Naive thymus-derived CD4-positive, alpha-beta T cell (primary cell): ENCODE measurements at regions of chr7 and their contacts with region 1.

Region 1: DNA sequence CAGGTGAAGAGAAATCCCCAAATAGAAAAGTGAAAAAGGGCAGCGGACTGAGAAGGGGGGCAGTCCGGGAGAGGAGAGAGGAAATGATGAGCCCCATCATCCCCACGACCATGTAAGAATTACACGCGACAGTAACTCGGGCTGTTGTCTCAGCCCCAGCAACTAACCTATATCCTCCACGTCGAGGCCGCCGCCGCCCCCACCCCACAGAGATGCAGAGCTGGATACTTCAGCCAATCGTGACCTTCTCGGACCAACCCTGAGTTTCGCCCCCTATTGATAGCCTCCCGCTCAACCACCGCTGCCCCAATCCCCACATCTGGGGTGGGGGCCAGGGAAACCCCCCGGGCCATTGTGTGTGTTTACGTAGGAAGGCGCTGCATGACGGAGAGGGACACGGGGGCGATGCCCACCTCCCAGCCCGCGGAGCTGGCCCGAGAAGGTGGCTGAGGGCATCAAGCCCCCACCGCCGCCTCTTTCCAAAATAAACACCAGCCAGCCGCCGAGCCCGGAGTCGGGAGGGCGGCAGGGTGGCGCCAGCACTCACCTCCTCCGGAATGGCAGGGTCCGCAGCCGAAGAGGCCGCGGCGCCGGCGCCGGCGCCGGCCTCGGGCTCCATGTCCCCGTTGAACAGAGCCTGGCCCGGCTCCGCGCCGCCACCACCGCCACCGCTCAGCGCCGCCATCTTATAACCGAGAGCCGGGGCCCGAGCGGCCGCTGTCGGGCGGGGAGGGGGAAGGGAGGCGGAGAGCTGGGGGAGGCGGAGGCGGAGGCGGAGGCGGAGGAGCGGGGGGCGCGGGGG is 509 bp downstream of the BRAF start:
- DNase-seq: peak; percentile 61 to 89 (median 70)
- ATAC-seq: peak; percentile 84
- H3K4me3 ChIP-seq: peak overlapping the region; percentile 85
- H3K4me3 Mint-ChIP-seq: peak overlapping the region in 1 of 10 donors; percentile 89
- H3K27ac ChIP-seq: peak overlapping the region; percentile 100
- H3K27ac Mint-ChIP-seq: peak overlapping the region in 3 of 9 donors; percentile 92 to 99 (median 94)
- H3K4me1 ChIP-seq: peaks cover 9 to 18% of the 10 kb centered on the region in 2 donors
- H3K4me1 Mint-ChIP-seq: peaks cover 10 to 44% (median 22%) of the 10 kb centered on the region in 7 donors
- H3K27me3 ChIP-seq: no peaks in the 10 kb centered on the region
- H3K27me3 Mint-ChIP-seq: peaks cover 0 to 5% (median 0%) of the 10 kb centered on the region in 5 donors

Region 2: GRCh38 chr7:140403878-140404564 is 520.2 kb before region 1 on chr7 and contains the start of gene RAB19:
- CTCF ChIA-PET with region 1: no interaction called
- POLR2A ChIA-PET with region 1: no interaction called
- intact Hi-C with region 1: loop called in 1 of 2 experiments (anchors 5 kb)
- DNase-seq: peak; percentile 7 to 67 (median 56)
- ATAC-seq: peak; percentile 87
- H3K4me3 ChIP-seq: peak within 1 kb of the TSS; percentile 82
- H3K4me3 Mint-ChIP-seq: peak within 1 kb of the TSS; percentile 92 to 99 (median 97)
- H3K27ac ChIP-seq: peak within 1 kb of the TSS; percentile 87
- H3K27ac Mint-ChIP-seq: peak within 1 kb of the TSS; percentile 91 to 99 (median 96)
- H3K4me1 ChIP-seq: peaks cover 8 to 11% of the 10 kb centered on the region in 2 donors
- H3K4me1 Mint-ChIP-seq: peaks cover 13 to 42% (median 29%) of the 10 kb centered on the region in 7 donors
- H3K27me3 ChIP-seq: no peaks in the 10 kb centered on the region
- H3K27me3 Mint-ChIP-seq: peaks cover 0 to 3% (median 0%) of the 10 kb centered on the region in 5 donors
- total RNA-seq, gene RAB19: 1.8 to 13.3 (median 3.3) TPM

Region 3: GRCh38 chr7:140593672-140593982 is 330.6 kb before region 1 on chr7:
- CTCF ChIA-PET with region 1: no interaction called
- POLR2A ChIA-PET with region 1: no interaction called
- intact Hi-C with region 1: no loop called
- DNase-seq: no peak
- ATAC-seq: no peak
- H3K4me3 ChIP-seq: no peak overlapping the region
- H3K4me3 Mint-ChIP-seq: no peak overlapping the region
- H3K27ac ChIP-seq: no peak overlapping the region
- H3K27ac Mint-ChIP-seq: peak overlapping the region in 1 of 9 donors; percentile 86
- H3K4me1 ChIP-seq: no peaks in the 10 kb centered on the region
- H3K4me1 Mint-ChIP-seq: peaks cover 0 to 5% (median 3%) of the 10 kb centered on the region in 7 donors
- H3K27me3 ChIP-seq: no peaks in the 10 kb centered on the region
- H3K27me3 Mint-ChIP-seq: peaks cover 4 to 22% (median 12%) of the 10 kb centered on the region in 5 donors

Region 4: DNA sequence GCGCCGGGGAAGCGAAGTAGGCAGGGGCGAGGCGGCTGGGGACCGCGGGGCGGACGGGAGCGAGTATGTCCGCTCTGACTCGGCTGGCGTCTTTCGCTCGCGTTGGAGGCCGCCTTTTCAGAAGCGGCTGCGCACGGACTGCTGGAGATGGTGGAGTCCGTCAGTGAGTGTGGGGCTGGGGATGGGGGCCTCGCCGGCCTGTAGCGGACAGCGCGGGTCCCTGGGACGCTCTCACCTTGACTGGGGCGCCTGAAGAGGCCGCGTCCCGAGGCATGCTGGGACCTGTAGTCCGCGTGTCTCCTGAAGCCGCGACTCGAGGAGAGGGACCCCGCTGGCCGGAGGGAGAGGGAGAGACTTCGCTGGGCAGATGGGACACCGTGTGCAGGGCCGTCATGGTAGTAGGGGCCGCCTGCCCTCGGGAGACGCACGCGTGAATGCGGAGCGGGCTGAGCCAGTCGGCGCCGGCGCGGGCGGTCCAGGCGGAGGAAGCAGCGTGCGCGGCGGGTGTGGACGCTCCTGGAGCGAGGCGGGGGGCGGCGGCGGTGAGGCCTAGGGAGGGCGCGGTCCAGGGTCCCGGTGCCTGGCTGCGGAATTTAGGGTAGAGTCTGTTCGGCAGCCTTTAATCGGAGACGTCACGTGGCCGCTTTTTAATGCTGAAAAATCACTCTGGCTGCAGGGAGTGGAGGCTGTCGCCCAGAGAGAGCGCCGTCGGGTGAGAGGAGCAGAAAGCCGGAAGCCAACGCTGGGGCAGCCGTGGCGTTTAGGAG is 227.4 kb before region 1 on chr7 and contains the start of gene NDUFB2:
- CTCF ChIA-PET with region 1: no interaction called
- POLR2A ChIA-PET with region 1: no interaction called
- intact Hi-C with region 1: loop called (anchors 1 kb)
- DNase-seq: peak; percentile 72 to 92 (median 90)
- ATAC-seq: peak; percentile 92
- H3K4me3 ChIP-seq: peak within 1 kb of the TSS; percentile 99
- H3K4me3 Mint-ChIP-seq: peak within 1 kb of the TSS; percentile 87 to 100 (median 98)
- H3K27ac ChIP-seq: peak within 1 kb of the TSS; percentile 88
- H3K27ac Mint-ChIP-seq: peak within 1 kb of the TSS; percentile 92 to 99 (median 98)
- H3K4me1 ChIP-seq: peaks cover 12 to 16% of the 10 kb centered on the region in 2 donors
- H3K4me1 Mint-ChIP-seq: peaks cover 18 to 50% (median 40%) of the 10 kb centered on the region in 7 donors
- H3K27me3 ChIP-seq: no peaks in the 10 kb centered on the region
- H3K27me3 Mint-ChIP-seq: no peaks in the 10 kb centered on the region
- total RNA-seq, gene NDUFB2: 88.3 to 184 (median 94.0) TPM

Region 5: GRCh38 chr7:140863184-140863583 is 61.0 kb before region 1 on chr7:
- CTCF ChIA-PET with region 1: no interaction called
- POLR2A ChIA-PET with region 1: no interaction called
- intact Hi-C with region 1: loop called in 1 of 2 experiments (anchors 5 kb)
- DNase-seq: no peak
- ATAC-seq: no peak
- H3K4me3 ChIP-seq: no peak overlapping the region
- H3K4me3 Mint-ChIP-seq: no peak overlapping the region
- H3K27ac ChIP-seq: no peak overlapping the region
- H3K27ac Mint-ChIP-seq: peak overlapping the region in 1 of 9 donors; percentile 10
- H3K4me1 ChIP-seq: no peaks in the 10 kb centered on the region
- H3K4me1 Mint-ChIP-seq: peaks cover 4 to 80% (median 60%) of the 10 kb centered on the region in 7 donors
- H3K27me3 ChIP-seq: no peaks in the 10 kb centered on the region
- H3K27me3 Mint-ChIP-seq: no peaks in the 10 kb centered on the region

Region 6: GRCh38 chr7:140881507-140882228 is 42.6 kb before region 1 on chr7:
- CTCF ChIA-PET with region 1: no interaction called
- POLR2A ChIA-PET with region 1: no interaction called
- intact Hi-C with region 1: no loop called
- DNase-seq: no peak
- ATAC-seq: no peak
- H3K4me3 ChIP-seq: no peak overlapping the region
- H3K4me3 Mint-ChIP-seq: peak overlapping the region in 2 of 10 donors; percentile 4
- H3K27ac ChIP-seq: no peak overlapping the region
- H3K27ac Mint-ChIP-seq: peak overlapping the region in 4 of 9 donors; percentile 1 to 35 (median 5)
- H3K4me1 ChIP-seq: peaks cover 0 to 3% of the 10 kb centered on the region in 2 donors
- H3K4me1 Mint-ChIP-seq: peaks cover 18 to 70% (median 61%) of the 10 kb centered on the region in 7 donors
- H3K27me3 ChIP-seq: no peaks in the 10 kb centered on the region
- H3K27me3 Mint-ChIP-seq: no peaks in the 10 kb centered on the region

Region 7: DNA sequence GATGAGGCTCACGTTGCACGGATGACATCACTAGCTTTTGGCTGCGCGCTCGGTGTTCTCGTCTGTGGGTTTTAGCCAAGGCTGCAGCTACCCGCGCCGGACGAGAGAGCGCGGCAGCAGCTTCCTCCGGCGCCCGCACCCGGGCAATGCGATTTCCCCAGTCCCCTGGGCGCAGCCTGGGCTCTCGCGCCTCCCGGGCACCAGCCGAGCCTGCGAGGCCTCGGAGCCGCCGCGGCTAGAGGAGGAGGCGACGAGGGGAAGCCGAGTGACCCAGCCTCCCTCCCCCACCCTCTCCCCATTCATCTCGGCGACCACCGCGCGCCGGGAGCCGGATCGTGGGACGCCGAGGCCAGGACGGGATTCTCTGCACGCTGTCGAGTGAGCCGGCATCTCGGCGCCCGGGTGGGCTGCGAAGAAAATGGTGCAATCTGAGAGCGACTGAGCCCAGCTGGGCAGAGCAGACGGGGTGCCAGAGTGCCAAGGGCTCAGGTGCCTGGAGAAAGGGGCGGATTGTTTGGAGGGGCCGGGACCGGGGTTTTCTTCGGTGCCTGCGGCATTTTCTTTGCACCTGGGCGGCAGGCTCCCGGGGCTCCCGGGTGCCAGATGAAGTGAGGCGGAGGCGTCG is 148.4 kb after region 1 on chr7:
- CTCF ChIA-PET with region 1: no interaction called
- POLR2A ChIA-PET with region 1: no interaction called
- intact Hi-C with region 1: loop called in 1 of 2 experiments (anchors 5 kb)
- DNase-seq: peak in 5 of 9 donors; percentile 2 to 39 (median 5)
- ATAC-seq: peak; percentile 45
- H3K4me3 ChIP-seq: peak overlapping the region; percentile 42
- H3K4me3 Mint-ChIP-seq: peak overlapping the region; percentile 74 to 92 (median 86)
- H3K27ac ChIP-seq: no peak overlapping the region
- H3K27ac Mint-ChIP-seq: no peak overlapping the region
- H3K4me1 ChIP-seq: peaks cover 5 to 6% of the 10 kb centered on the region in 2 donors
- H3K4me1 Mint-ChIP-seq: peaks cover 17 to 30% (median 28%) of the 10 kb centered on the region in 7 donors
- H3K27me3 ChIP-seq: peaks cover 4 to 31% of the 10 kb centered on the region in 2 donors
- H3K27me3 Mint-ChIP-seq: peaks cover 42 to 49% (median 48%) of the 10 kb centered on the region in 5 donors

Region 8: DNA sequence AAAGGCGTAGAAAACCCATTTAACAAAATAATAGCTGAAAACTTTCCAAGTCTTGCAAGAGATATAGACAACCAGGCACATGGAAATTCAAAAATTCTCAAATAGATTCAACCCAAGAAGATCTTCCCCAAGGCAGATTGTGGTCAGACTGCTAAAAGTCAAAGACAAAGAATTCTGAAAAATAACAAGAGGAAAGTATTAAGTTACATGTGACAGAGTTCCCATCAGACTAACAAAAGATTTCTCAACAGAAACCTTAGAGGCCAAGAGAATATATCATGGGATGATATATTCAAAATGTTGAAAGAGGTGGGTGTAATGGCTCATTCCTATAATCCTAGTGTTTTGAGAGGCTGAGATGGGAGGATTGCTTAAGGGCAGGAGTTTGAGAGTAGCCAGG is 209.4 kb after region 1 on chr7:
- CTCF ChIA-PET with region 1: no interaction called
- POLR2A ChIA-PET with region 1: no interaction called
- intact Hi-C with region 1: no loop called
- DNase-seq: no peak
- ATAC-seq: no peak
- H3K4me3 ChIP-seq: no peak overlapping the region
- H3K4me3 Mint-ChIP-seq: no peak overlapping the region
- H3K27ac ChIP-seq: no peak overlapping the region
- H3K27ac Mint-ChIP-seq: no peak overlapping the region
- H3K4me1 ChIP-seq: no peaks in the 10 kb centered on the region
- H3K4me1 Mint-ChIP-seq: no peaks in the 10 kb centered on the region
- H3K27me3 ChIP-seq: no peaks in the 10 kb centered on the region
- H3K27me3 Mint-ChIP-seq: peaks cover 27 to 39% (median 28%) of the 10 kb centered on the region in 5 donors

Region 9: GRCh38 chr7:141701489-141702046 is 777.3 kb after region 1 on chr7:
- CTCF ChIA-PET with region 1: no interaction called
- POLR2A ChIA-PET with region 1: no interaction called
- intact Hi-C with region 1: loop called in 1 of 2 experiments (anchors 5 kb)
- DNase-seq: peak; percentile 50 to 81 (median 76)
- ATAC-seq: peak; percentile 90
- H3K4me3 ChIP-seq: peak overlapping the region; percentile 51
- H3K4me3 Mint-ChIP-seq: peak overlapping the region; percentile 80 to 95 (median 88)
- H3K27ac ChIP-seq: peak overlapping the region; percentile 90
- H3K27ac Mint-ChIP-seq: peak overlapping the region; percentile 77 to 96 (median 88)
- H3K4me1 ChIP-seq: peaks cover 7 to 19% of the 10 kb centered on the region in 2 donors
- H3K4me1 Mint-ChIP-seq: peaks cover 39 to 56% (median 49%) of the 10 kb centered on the region in 7 donors
- H3K27me3 ChIP-seq: no peaks in the 10 kb centered on the region
- H3K27me3 Mint-ChIP-seq: peaks cover 0 to 16% (median 0%) of the 10 kb centered on the region in 5 donors